ENCODE measurements at regions of chr5 and their contacts with region 1.

Region 1: GRCh38 chr5:138132543-138132942 is 6.7 kb downstream of the NME5 start:
- DNase-seq: no peak
- ATAC-seq: no peak

Region 2: DNA sequence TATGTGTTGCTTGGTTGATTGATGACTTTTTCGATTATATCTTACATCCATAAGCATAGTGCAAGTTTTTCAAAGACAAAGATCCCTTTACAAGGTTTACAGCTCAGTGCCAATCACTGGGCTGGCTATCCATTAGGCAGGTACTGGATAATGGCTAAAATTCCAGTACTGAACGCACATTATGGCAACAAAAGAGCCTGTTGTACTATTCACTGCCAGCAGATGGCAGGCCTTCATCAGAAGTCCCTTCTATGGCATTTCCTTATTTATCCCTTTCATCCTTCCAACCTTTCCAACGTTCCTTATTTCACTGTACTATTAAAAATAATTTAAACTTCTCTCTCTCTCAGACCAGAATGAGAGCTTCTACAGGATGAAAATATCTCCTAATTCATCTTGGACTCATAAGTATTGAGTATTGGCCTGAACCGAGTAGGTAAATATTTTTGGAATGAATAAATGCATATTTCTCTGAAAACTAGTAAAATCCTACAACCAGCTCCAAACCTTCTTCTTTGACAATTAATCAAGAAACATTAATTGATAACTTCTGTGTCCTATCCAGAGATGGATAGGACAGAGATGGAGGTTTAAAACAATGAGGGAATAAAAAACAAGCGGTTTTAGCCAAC is 55.4 kb before region 1 on chr5:
- intact Hi-C with region 1: loop called (anchors 2 to 5 kb)
- DNase-seq: peak; percentile 68
- ATAC-seq: peak; percentile 61 to 68

Region 3: DNA sequence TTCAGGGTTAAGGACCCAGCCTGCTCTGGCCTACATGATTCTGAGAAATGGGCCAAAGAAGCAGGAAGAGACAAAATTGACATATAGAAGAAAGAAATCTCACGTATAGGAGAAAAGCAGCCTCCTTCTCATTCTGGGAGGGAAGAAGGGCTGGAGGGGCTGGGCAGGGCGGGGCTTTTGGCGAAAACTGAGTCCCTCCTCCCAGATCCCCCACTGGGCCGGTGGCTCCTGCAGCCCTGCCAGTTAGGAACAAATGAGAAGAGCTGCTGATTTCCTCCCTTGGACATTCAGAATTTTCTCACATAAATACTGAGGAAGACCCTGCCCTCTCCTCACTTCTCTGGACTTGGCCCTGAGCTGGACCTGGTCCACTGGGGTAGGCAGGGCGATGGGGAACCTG is 48.8 kb before region 1 on chr5 and contains the start of gene WNT8A:
- intact Hi-C with region 1: loop called in 1 of 2 experiments (anchors 5 kb)
- DNase-seq: no peak
- ATAC-seq: no peak
- total RNA-seq, gene WNT8A: not detected